ENCODE measurements at regions of chr18 and their contacts with region 1.

Region 1: DNA sequence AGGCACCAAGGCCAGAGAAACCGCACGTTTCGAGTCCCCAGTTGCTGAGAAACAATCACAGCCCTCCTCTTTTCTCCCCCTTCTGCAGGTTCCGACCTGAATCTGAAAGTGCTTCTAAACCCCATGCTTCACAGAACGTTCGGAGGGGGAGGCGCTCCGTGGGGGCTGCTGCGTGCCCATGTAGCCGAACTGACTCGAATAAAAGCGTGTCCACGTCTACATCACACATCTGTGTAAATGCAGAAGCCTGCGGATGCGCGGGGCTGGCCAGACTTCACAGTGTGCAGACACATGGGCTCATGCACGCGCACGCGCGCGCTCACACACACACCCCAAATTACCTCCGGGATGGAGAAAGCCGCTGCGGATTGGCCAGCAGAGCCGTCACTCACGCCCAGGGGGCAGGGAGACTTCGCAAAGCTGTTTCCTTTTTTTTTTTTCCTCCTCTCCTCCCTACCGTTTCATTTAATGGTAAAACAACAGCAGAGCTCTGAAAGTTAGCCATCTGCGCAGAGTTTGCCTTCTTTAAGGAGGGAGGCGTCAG is 2.3 kb downstream of the ZNF516 start:
- DNase-seq: peak; percentile 100
- H3K4me3 Mint-ChIP-seq: peak overlapping the region; percentile 93
- H3K27ac Mint-ChIP-seq: peak overlapping the region; percentile 74
- H3K4me1 Mint-ChIP-seq: peaks cover 23% of the 10 kb centered on the region
- H3K27me3 Mint-ChIP-seq: peaks cover 14% of the 10 kb centered on the region

Region 2: GRCh38 chr18:75247611-75248421 is 1244.9 kb before region 1 on chr18:
- CTCF ChIA-PET with region 1: no interaction called
- intact Hi-C with region 1: loop called (anchors 2 kb)
- DNase-seq: peak; percentile 36
- H3K4me3 Mint-ChIP-seq: peak overlapping the region; percentile 77
- H3K27ac Mint-ChIP-seq: peak overlapping the region; percentile 93
- H3K4me1 Mint-ChIP-seq: peaks cover 60% of the 10 kb centered on the region
- H3K27me3 Mint-ChIP-seq: no peaks in the 10 kb centered on the region

Region 3: GRCh38 chr18:76398896-76399612 is 93.7 kb before region 1 on chr18:
- CTCF ChIA-PET with region 1: no interaction called
- intact Hi-C with region 1: loop called (anchors 2 kb)
- DNase-seq: peak; percentile 88
- H3K4me3 Mint-ChIP-seq: no peak overlapping the region
- H3K27ac Mint-ChIP-seq: no peak overlapping the region
- H3K4me1 Mint-ChIP-seq: peaks cover 6% of the 10 kb centered on the region
- H3K27me3 Mint-ChIP-seq: no peaks in the 10 kb centered on the region

Region 4: DNA sequence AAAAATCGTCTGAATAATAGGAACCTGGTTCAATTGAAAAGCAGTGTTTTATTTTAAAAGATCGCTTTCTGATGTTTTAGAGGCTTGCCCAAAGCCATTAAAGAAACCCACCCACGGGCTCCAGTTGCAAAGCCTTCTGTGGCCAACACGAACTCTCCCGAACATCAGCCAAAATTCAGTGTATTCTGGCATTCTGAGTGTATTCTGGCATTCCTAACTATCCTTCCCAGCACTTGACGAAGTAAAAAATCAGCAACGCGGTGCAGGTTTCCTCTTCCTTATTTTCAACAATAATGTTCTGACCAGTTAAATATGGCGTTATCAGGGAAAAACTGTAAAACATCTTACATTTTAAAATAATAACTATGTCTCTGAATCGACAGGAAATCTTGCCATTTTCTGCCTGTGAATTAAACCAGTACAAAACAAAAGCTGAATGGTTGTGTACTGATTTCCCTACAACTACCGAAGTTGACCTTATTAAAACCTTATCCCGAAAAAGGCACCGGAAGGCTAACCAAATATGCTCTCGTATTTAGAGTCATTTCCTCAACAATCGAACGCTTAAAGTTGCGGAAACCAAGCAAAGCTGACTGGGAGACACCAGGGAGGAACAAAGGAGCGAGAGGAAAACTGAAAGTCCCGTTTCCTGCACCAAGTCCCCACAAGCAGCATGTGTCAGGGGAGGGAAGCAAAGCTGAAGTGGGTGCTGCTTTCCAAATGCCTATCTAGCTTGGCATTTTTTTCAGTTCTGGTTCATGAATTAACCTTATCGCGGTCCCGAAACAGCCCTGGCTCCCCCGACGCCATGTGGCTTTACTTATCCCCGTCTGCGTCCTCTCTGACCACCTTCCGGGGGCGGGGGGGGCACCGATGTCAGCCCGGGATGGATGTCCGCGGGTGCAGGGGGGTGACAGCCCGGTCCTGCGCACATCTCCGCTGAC is 42.0 kb before region 1 on chr18:
- CTCF ChIA-PET with region 1: no interaction called
- intact Hi-C with region 1: loop called (anchors 2 kb)
- DNase-seq: peak; percentile 54
- H3K4me3 Mint-ChIP-seq: peak overlapping the region; percentile 76
- H3K27ac Mint-ChIP-seq: peak overlapping the region; percentile 74
- H3K4me1 Mint-ChIP-seq: peaks cover 39% of the 10 kb centered on the region
- H3K27me3 Mint-ChIP-seq: peaks cover 3% of the 10 kb centered on the region

Region 5: GRCh38 chr18:76686737-76687262 is 194.1 kb after region 1 on chr18:
- CTCF ChIA-PET with region 1: no interaction called
- intact Hi-C with region 1: loop called (anchors 10 kb)
- DNase-seq: peak; percentile 62
- H3K4me3 Mint-ChIP-seq: no peak overlapping the region
- H3K27ac Mint-ChIP-seq: no peak overlapping the region
- H3K4me1 Mint-ChIP-seq: peaks cover 11% of the 10 kb centered on the region
- H3K27me3 Mint-ChIP-seq: peaks cover 14% of the 10 kb centered on the region

Region 6: DNA sequence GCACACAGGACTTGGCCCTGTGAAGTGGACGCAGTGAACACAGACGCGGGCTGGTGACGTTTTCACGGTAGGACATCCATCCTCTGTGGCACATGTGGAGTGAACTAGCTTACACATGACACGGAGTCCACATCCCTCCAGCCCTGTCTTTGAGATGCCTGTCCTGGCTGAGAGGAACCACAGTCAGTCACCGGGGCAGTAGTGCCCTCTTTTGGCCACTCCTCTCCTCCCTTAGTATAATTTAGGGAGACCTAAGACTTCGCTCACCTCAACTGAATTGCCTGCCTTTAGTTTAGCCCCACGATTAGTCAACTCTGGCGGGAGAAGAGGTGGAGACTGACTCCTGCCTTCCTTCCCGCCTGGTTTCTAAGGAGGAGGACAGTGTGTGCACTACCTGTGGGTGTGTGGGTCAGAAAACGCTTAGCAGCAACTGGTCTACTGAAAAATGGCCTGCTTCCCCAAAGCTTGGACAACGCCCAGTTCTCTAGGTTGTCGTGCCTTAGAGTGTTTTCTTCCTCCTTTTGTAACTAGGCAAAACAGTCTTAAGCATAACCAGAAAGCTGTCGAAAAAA is 569.3 kb after region 1 on chr18:
- CTCF ChIA-PET with region 1: no interaction called
- intact Hi-C with region 1: loop called (anchors 2 kb)
- DNase-seq: peak; percentile 55
- H3K4me3 Mint-ChIP-seq: peak overlapping the region; percentile 11
- H3K27ac Mint-ChIP-seq: peak overlapping the region; percentile 98
- H3K4me1 Mint-ChIP-seq: peaks cover 78% of the 10 kb centered on the region
- H3K27me3 Mint-ChIP-seq: no peaks in the 10 kb centered on the region

Measured in activated naive CD4-positive, alpha-beta T cell treated with anti-CD3 and anti-CD28 coated beads for 36 hours (primary cell).